Cardiac septum (tissue), 1 donor: ENCODE measurements at regions of chr16 and their contacts with region 1.

Region 1: GRCh38 chr16:50806099-50807062 is 64.5 kb downstream of the CYLD start:
- DNase-seq: peak; percentile 83

Region 2: DNA sequence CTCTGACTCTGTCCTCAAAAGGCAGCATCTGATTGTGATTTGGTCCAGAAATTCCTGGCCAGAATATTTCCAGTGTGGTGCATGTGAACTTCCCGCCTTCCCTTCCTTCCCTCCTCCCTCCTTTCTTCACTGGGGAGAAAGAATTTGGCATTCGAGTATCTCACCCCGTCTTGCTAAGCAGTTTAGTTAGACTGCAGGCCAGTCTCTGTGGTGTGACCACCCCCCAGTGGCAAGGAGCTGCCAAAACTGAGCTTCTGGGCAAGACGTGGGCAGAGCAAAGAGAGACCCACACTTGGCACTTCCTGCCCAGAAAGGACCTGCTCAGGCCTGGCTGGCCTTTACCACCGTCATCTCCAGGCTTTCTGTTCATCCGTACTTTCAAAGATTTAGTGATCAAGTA is 161.7 kb before region 1 on chr16:
- intact Hi-C with region 1: no loop called
- DNase-seq: no peak

Region 3: DNA sequence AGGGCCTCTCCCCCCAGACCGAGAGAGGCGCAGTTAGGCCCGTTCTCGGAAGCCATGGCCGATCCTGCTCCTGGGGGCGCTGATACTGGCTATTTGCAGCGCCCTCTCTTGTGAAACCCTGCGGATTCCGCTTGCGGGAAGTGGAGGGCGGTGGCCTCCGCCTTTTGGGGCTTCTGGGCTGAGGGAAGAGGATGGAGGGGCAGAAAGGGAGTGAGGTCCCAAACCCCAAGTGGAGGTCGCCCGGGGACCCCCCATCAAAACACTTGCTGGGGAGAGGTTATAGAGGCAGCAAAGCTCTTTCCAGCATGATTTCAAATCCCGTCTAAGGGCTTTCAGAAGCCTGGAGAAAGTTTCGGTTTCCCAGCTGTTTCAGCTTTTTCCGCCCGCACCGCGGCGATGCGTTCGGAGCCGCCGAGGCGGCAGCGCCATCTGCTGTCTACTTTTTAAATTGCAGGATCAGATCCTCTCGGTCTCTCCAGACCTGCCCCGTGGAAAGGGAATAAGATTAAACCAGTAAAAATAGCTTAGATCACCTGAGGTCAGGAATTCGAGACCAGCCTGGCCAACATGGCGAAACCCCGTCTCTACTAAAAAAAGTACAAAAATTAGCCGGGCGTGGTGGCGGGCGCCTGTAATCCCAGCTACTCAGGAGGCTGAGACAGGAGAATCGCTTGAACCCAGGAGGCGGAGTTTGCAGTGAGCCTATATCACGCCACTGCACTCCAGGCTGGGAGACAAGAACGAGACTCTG is 141.1 kb before region 1 on chr16:
- intact Hi-C with region 1: loop called (anchors 10 kb)
- DNase-seq: peak; percentile 93